ENCODE measurements at regions of chr16 and their contacts with region 1.

Region 1: GRCh38 chr16:56317998-56318826 is 107.1 kb downstream of the AMFR start:
- DNase-seq: peak; percentile 89 to 94
- ATAC-seq: peak; percentile 90
- H3K4me3 ChIP-seq: no peak overlapping the region
- H3K27ac ChIP-seq: no peak overlapping the region
- H3K4me1 ChIP-seq: no peaks in the 10 kb centered on the region
- H3K27me3 ChIP-seq: no peaks in the 10 kb centered on the region

Region 2: GRCh38 chr16:55944377-55944802 is 373.8 kb before region 1 on chr16:
- intact Hi-C with region 1: loop called (anchors 1 to 2 kb)
- DNase-seq: peak; percentile 79 to 80
- ATAC-seq: peak; percentile 94
- H3K4me3 ChIP-seq: no peak overlapping the region
- H3K27ac ChIP-seq: no peak overlapping the region
- H3K4me1 ChIP-seq: no peaks in the 10 kb centered on the region
- H3K27me3 ChIP-seq: no peaks in the 10 kb centered on the region

Region 3: GRCh38 chr16:56041686-56042085 is 276.5 kb before region 1 on chr16:
- intact Hi-C with region 1: loop called in 1 of 2 experiments (anchors 2 kb)
- DNase-seq: no peak
- ATAC-seq: peak; percentile 69
- H3K4me3 ChIP-seq: no peak overlapping the region
- H3K27ac ChIP-seq: no peak overlapping the region
- H3K4me1 ChIP-seq: no peaks in the 10 kb centered on the region
- H3K27me3 ChIP-seq: no peaks in the 10 kb centered on the region

Region 4: DNA sequence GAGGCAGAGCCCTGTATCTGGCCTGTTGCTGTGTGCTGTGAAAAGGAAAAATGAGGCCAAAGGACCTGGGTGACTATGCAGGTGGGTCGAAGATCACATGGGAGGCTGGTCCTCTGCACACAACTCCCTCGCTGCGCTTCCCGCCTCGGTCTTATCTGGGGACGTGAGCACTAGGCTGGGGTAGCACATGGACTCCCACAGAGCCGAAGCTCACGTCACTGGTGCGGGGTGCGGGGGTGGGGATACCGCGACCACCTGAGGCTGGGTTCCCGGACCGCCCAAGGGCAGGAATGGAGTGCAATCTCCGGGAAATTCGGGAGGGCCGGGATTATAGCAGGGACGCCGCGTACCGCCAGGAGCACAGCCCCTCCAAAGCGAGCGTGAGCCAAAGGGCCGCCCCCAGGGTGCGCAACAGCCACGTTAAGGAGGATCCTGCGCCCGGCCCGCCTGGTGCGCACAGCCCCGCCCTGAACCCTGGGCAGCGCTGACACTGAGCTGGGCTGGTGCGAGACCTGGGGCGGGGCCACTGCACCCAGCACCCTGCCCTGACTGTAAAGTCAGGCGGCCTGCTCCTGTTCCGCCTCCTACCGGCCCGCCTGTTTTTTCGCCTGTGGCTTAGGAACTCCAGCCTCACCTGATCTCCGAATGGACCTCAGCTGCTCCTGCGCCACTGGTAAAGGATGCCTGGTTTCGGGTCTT is 325.0 kb after region 1 on chr16:
- intact Hi-C with region 1: no loop called
- DNase-seq: peak; percentile 89 to 93
- ATAC-seq: peak; percentile 89
- H3K4me3 ChIP-seq: no peak overlapping the region
- H3K27ac ChIP-seq: peak overlapping the region in 1 of 2 donors; percentile 15
- H3K4me1 ChIP-seq: no peaks in the 10 kb centered on the region
- H3K27me3 ChIP-seq: no peaks in the 10 kb centered on the region

Measured in aorta (tissue), 5 donors.